HCT116 (cell line): ENCODE measurements at regions of chr12 and their contacts with region 1.

Region 1: GRCh38 chr12:10673660-10674384 is at the start of gene STYK1:
- DNase-seq: peak; percentile 81
- ATAC-seq: peak; percentile 92
- H3K4me3 ChIP-seq: peak within 1 kb of the TSS; percentile 50 to 77
- H3K27ac ChIP-seq: peak within 1 kb of the TSS; percentile 67
- H3K4me1 ChIP-seq: peaks cover 0 to 18% of the 10 kb centered on the region in 2 experiments; a peak in 3 of 4 replicates
- H3K27me3 ChIP-seq: no peaks in the 10 kb centered on the region
- CTCF ChIP-seq: peak; percentile 88 to 98 (median 93)
- POLR2A ChIP-seq: no peak
- RAD21 ChIP-seq: peak; percentile 89
- total RNA-seq, gene STYK1: 4.4 TPM

Region 2: DNA sequence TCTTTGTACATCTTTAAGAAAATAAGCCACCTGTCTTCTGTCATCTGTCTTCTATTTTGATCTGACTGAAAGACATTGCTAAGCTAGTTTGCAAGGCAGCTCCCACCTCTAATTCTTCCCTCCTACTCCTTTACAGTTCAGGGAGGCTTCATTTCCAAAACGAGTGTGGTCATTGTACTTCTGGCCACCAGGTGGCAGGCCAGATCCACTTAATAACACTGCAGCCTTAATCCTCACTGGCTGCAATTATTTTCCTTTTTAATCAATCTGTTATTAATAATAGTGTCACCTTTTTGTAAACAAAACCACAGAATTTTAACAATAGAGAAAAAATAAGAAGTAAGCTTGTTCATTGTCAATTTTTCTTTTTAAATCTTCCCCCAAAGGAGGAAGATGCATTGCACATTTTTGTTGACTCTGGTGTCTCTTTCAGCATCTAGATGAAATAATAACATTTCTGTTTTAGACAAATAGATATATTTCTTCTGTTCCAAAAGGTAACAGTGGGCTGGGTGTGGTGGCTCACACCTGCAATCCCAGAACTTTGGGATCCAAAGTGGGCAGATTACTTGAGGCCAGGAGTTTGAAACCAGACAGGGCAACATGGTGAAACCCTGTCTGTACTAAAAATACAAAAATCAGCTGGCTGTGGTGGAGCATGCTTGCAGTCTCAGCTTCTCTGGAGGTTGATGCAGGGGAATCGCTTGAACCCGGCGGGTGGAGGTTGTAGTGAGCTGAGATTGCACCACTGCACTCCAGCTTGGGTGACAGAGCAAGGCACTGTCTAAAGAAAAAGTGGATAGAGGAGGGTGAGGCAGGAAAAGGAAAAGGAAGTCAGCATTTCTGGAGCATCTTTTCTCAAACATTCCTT is 437.8 kb before region 1 on chr12:
- CTCF ChIA-PET with region 1: no interaction called
- POLR2A ChIA-PET with region 1: no interaction called
- RAD21 ChIA-PET with region 1: no interaction called
- intact Hi-C with region 1: loop called (anchors 5 kb)
- DNase-seq: peak; percentile 31
- ATAC-seq: peak; percentile 85
- H3K4me3 ChIP-seq: no peak overlapping the region
- H3K27ac ChIP-seq: no peak overlapping the region
- H3K4me1 ChIP-seq: no peaks in the 10 kb centered on the region
- H3K27me3 ChIP-seq: no peaks in the 10 kb centered on the region
- CTCF ChIP-seq: peak; percentile 73 to 79 (median 75)
- POLR2A ChIP-seq: no peak
- RAD21 ChIP-seq: peak; percentile 87

Region 3: GRCh38 chr12:10331642-10332239 is 342.1 kb before region 1 on chr12:
- CTCF ChIA-PET with region 1: no interaction called
- POLR2A ChIA-PET with region 1: no interaction called
- RAD21 ChIA-PET with region 1: no interaction called
- intact Hi-C with region 1: loop called (anchors 1 kb)
- DNase-seq: peak; percentile 56
- ATAC-seq: peak; percentile 98
- H3K4me3 ChIP-seq: no peak overlapping the region
- H3K27ac ChIP-seq: no peak overlapping the region
- H3K4me1 ChIP-seq: peaks cover 0 to 3% of the 10 kb centered on the region in 2 experiments; a peak in 1 of 4 replicates
- H3K27me3 ChIP-seq: no peaks in the 10 kb centered on the region
- CTCF ChIP-seq: peak; percentile 81 to 95 (median 83)
- POLR2A ChIP-seq: no peak
- RAD21 ChIP-seq: peak; percentile 94

Region 4: DNA sequence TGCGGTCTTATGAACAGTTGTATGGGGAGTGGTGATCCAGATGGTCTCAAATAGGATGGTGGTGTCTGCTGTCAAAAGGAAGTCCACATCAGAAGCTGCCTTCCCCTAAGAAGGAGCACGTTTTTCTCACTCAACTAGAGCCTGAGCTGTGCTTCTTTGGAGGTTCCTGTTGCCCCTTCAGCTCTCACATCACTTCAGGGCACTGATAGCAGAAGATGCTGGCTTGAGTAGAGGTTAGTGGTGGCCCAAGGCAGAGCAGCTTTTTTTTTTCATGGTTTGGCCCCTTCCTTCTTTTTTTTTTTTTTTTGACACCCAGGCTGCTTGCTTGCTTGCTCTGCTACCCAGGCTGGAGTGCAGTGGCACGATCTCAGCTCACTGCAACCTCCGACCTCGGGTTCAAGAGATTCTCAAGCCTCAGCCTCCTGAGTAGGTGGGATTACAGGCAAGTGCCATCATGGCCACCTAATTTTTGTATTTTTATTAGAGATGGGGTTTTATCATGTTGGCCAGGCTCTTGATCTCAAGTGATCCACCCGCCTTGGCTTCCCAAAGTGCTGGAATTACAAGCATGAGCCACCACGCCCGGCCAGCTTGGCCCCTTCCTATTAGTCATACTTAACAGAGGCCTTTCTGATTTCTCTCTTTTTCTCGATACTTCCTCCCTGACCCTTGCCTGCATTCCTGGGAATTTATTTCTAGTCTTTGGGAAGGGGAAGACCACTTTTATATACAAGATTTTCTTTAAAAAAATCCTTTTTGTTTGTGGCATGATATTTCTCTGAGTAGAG is 334.6 kb before region 1 on chr12:
- CTCF ChIA-PET with region 1: no interaction called
- POLR2A ChIA-PET with region 1: no interaction called
- RAD21 ChIA-PET with region 1: no interaction called
- intact Hi-C with region 1: loop called (anchors 2 kb)
- DNase-seq: peak; percentile 23
- ATAC-seq: peak; percentile 83
- H3K4me3 ChIP-seq: peak overlapping the region in 1 of 2 experiments; percentile 17; a peak in 1 of 4 replicates
- H3K27ac ChIP-seq: peak overlapping the region; percentile 7
- H3K4me1 ChIP-seq: peaks cover 15 to 20% of the 10 kb centered on the region in 2 experiments
- H3K27me3 ChIP-seq: no peaks in the 10 kb centered on the region
- CTCF ChIP-seq: no peak
- POLR2A ChIP-seq: no peak
- RAD21 ChIP-seq: no peak

Region 5: DNA sequence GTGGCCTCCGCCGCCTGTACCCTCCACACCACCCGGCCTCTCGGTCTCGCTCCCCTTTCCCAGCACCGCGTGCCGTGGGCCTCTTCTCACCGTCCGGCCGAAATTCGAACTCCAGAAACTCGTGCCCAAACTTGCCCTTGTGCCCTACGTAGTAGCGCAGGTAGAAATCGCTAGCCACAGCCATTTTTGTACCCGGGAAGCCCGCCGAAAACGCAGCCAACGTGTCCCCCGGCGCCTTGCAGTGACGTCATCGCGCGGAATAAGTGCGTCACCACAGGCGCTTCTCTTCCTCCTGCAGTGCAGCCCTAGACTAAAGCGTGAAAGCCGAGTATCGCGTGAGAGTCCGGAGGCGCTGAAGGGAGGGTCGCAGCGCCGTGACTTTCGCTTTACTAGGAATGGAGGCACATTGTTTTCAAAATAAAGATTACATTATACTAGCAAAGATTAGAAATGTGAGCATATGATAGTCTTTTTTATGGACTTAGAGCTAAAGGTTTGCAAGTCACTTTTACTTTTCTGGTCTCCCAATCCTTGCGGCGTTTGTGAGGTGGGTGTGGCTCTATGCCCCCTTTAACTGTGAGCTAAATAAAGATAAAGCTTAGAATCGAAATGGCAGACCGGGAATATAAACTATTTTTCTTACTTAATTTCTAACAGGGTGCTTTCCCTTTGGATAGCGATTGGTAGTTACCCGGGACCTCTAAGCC is 60.3 kb before region 1 on chr12 and contains the start of gene MAGOHB:
- CTCF ChIA-PET with region 1: no interaction called
- POLR2A ChIA-PET with region 1: no interaction called
- RAD21 ChIA-PET with region 1: no interaction called
- intact Hi-C with region 1: loop called (anchors 5 kb)
- DNase-seq: peak; percentile 90
- ATAC-seq: peak; percentile 95
- H3K4me3 ChIP-seq: peak within 1 kb of the TSS; percentile 71 to 92
- H3K27ac ChIP-seq: peak within 1 kb of the TSS; percentile 42
- H3K4me1 ChIP-seq: peaks cover 0 to 19% of the 10 kb centered on the region in 2 experiments; a peak in 3 of 4 replicates
- H3K27me3 ChIP-seq: no peaks in the 10 kb centered on the region
- CTCF ChIP-seq: no peak
- POLR2A ChIP-seq: peak; percentile 88
- RAD21 ChIP-seq: no peak
- total RNA-seq, gene MAGOHB: 55.8 TPM

Region 6: DNA sequence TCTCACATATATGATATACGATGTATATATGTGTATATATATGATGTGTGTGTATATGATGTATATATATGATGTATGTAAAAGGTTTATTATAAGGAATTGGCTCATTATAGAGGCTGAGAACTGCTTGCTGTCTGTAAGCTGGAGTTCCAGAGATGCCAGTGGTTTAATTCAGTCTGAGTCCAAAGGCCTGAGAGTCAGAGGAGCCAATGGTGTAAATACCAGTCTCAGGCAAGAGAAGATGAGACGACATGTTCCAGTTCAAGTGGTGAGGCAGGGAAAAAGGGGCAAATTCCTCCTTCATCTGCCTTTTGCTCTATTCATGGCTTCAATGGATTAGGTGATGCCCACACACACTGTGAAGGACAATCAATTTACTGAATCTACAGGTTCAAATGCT is 17.1 kb after region 1 on chr12:
- CTCF ChIA-PET with region 1: no interaction called
- POLR2A ChIA-PET with region 1: no interaction called
- RAD21 ChIA-PET with region 1: no interaction called
- intact Hi-C with region 1: no loop called
- DNase-seq: no peak
- ATAC-seq: no peak
- H3K4me3 ChIP-seq: no peak overlapping the region
- H3K27ac ChIP-seq: no peak overlapping the region
- H3K4me1 ChIP-seq: no peaks in the 10 kb centered on the region
- H3K27me3 ChIP-seq: no peaks in the 10 kb centered on the region
- CTCF ChIP-seq: no peak
- POLR2A ChIP-seq: no peak
- RAD21 ChIP-seq: no peak

Region 7: DNA sequence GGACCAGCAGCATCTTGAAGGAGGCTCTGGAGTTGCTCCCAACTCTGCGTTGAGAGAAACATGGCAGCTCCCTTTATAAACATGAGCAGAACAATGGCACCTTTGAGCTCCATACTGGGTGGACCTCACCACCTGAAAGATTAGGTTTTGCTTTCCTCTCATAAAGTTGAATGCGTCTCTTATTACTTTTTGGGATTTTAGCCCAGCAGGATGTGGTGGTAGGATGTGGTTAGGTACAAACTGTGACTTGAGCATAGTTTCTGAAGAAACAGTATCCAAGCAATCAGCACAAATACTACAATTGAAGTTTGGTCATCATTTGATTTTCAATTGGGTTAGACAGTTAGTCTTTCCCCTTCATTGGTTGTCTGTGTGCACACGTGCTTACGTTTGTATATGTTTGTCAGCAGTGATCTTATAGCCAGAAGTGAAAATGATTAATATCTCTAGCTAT is 175.6 kb after region 1 on chr12 and contains the start of gene PRR4:
- CTCF ChIA-PET with region 1: no interaction called
- POLR2A ChIA-PET with region 1: no interaction called
- RAD21 ChIA-PET with region 1: no interaction called
- intact Hi-C with region 1: no loop called
- DNase-seq: no peak
- ATAC-seq: no peak
- H3K4me3 ChIP-seq: no peak within 1 kb of the TSS
- H3K27ac ChIP-seq: no peak within 1 kb of the TSS
- H3K4me1 ChIP-seq: peaks cover 0 to 9% of the 10 kb centered on the region in 2 experiments; a peak in 1 of 4 replicates
- H3K27me3 ChIP-seq: no peaks in the 10 kb centered on the region
- CTCF ChIP-seq: no peak
- POLR2A ChIP-seq: no peak
- RAD21 ChIP-seq: no peak
- total RNA-seq, gene PRR4: 2.2 TPM